CD14-positive monocyte (primary cell): ENCODE measurements at regions of chr1 and their contacts with region 1.

Region 1: DNA sequence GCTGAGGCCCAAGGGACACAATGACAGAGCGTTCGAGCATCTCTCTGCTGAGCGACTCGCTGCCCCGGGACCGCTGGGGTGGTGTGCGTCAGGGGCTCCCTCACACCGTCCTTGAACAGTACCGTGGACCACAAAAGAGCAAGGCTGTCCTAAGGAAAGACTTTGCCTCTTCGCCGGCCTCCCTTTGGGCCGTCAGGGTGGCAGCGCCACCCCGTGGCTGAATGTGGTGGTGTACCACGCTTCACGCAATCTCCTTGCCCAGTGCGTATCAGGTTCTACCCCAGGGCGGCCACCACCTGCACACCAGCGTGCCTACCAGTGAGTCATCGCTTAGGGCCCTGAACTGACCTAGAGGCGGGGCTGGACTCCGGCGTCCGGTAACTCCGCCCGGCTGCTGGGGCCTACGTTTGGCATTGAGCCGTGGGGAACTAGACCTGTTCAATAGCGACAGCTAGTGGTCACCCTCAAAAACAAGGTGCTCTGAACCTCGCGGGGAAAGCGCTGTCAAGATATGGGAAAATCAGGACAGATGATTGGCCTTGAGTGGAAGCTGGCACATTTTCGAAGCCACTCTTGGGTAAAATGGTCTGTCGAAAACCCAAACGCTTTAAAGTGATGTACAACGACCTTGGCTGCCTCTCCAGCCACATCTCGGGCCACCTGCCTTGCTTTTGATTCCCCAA is 8.1 kb upstream of the TRAF3IP3 start:
- DNase-seq: peak; percentile 96 to 99 (median 97)
- H3K4me3 ChIP-seq: peak overlapping the region; percentile 9 to 65 (median 24)
- H3K4me3 Mint-ChIP-seq: peak overlapping the region; percentile 62 to 85
- H3K27ac ChIP-seq: peak overlapping the region; percentile 15 to 63
- H3K27ac Mint-ChIP-seq: peak overlapping the region; percentile 48 to 93 (median 89)
- H3K4me1 ChIP-seq: peaks cover 50 to 51% of the 10 kb centered on the region in 2 donors
- H3K4me1 Mint-ChIP-seq: peaks cover 45% of the 10 kb centered on the region
- H3K27me3 ChIP-seq: no peaks in the 10 kb centered on the region
- H3K27me3 Mint-ChIP-seq: peaks cover 0 to 6% (median 0%) of the 10 kb centered on the region in 3 donors
- CTCF ChIP-seq: peak; percentile 93

Region 2: DNA sequence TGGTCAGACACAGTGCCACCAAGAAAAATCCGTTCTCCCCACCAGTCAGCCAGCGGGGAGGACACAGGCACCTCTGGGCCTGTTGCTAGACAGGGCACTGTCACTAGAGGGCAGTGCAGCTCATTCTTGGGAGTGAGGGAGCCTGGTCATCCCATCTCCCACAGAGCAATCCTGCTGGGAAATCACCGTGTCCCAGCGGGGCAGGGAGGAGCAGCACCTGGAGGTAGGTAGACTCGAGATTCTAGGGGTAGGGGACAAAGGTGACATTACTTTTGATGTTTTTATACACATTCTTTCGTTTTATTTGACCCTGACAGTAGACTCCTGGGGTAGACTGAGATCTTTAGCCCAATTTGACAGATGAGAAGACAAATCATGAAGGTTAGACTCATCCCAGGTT is 170.9 kb before region 1 on chr1:
- intact Hi-C with region 1: loop called (anchors 5 kb)
- DNase-seq: peak; percentile 45 to 74 (median 71)
- H3K4me3 ChIP-seq: no peak overlapping the region
- H3K4me3 Mint-ChIP-seq: peak overlapping the region in 1 of 2 donors; percentile 46
- H3K27ac ChIP-seq: no peak overlapping the region
- H3K27ac Mint-ChIP-seq: peak overlapping the region in 2 of 7 donors; percentile 37 to 68
- H3K4me1 ChIP-seq: no peaks in the 10 kb centered on the region
- H3K4me1 Mint-ChIP-seq: no peaks in the 10 kb centered on the region
- H3K27me3 ChIP-seq: peaks cover 8 to 16% of the 10 kb centered on the region in 2 donors
- H3K27me3 Mint-ChIP-seq: peaks cover 4 to 26% (median 8%) of the 10 kb centered on the region in 3 donors
- CTCF ChIP-seq: peak; percentile 99

Region 3: DNA sequence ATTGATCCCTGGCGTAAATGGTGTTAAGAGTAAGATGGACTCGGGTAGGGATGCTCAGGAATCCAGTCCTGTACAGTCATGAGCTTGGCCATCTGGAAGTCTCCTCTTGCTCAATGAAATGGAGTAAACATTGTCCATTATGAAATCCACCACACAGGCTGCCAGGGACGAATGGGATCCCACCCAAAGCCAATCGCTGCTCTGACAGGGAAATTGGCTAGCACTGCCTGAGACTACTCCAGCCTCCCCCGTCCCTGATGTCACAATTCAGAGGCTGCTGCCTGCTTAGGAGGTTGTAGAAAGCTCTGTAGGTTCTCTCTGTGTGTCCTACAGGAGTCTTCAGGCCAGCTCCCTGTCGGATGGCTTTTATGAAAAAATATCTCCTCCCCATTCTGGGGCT is 43.1 kb before region 1 on chr1 and contains the start of gene HSD11B1:
- intact Hi-C with region 1: loop called (anchors 5 to 10 kb)
- DNase-seq: peak in 1 of 3 donors; percentile 12
- H3K4me3 ChIP-seq: peak within 1 kb of the TSS in 1 of 3 experiments; percentile 33
- H3K4me3 Mint-ChIP-seq: peak within 1 kb of the TSS in 1 of 2 donors; percentile 40
- H3K27ac ChIP-seq: no peak within 1 kb of the TSS
- H3K27ac Mint-ChIP-seq: peak within 1 kb of the TSS in 3 of 7 donors; percentile 11 to 40 (median 12)
- H3K4me1 ChIP-seq: peaks cover 18 to 20% of the 10 kb centered on the region in 2 donors
- H3K4me1 Mint-ChIP-seq: peaks cover 19% of the 10 kb centered on the region
- H3K27me3 ChIP-seq: no peaks in the 10 kb centered on the region
- H3K27me3 Mint-ChIP-seq: peaks cover 0 to 4% (median 0%) of the 10 kb centered on the region in 3 donors
- CTCF ChIP-seq: no peak
- polyA plus RNA-seq, gene HSD11B1: not detected

Region 4: DNA sequence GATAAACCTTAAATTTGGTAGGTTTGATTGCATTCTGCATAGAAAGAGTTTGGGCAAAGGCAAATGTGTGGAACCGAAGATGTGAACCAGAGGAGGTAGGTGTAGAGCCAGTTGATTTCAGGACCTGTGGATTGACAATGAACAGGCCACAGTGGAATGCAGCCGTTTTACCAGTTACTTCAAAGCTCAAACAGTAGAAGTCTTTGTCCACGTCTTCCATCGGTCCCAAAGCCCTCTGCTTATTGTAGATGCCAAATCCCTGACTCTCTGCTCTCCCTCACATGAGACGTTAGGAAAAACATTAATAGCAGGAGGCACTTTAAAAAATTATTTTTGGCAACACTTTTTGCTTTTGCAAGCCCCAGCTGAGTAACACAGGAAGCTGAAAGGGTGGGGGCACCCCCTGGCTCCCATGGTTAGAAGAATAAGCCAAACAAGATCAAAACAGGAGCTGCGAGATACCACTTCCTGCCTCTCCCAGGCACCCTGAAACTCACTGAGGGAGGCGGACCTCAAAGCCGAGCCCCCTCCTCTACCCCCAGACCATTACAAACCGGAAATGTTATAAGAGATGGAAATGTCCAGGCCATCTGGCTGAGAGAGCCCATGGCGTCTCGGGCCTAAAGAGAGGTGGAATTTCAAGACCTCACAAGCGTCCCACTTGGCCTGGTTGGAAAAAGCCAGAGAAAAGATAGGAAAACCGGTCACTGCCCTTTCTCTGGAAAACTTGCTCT is 21.6 kb after region 1 on chr1:
- intact Hi-C with region 1: loop called in 1 of 2 experiments (anchors 2 kb)
- DNase-seq: peak; percentile 77 to 90 (median 85)
- H3K4me3 ChIP-seq: peak overlapping the region; percentile 48 to 82 (median 55)
- H3K4me3 Mint-ChIP-seq: no peak overlapping the region
- H3K27ac ChIP-seq: peak overlapping the region; percentile 93 to 96
- H3K27ac Mint-ChIP-seq: no peak overlapping the region
- H3K4me1 ChIP-seq: peaks cover 70 to 91% of the 10 kb centered on the region in 2 donors
- H3K4me1 Mint-ChIP-seq: peaks cover 51% of the 10 kb centered on the region
- H3K27me3 ChIP-seq: no peaks in the 10 kb centered on the region
- H3K27me3 Mint-ChIP-seq: no peaks in the 10 kb centered on the region
- CTCF ChIP-seq: no peak

Region 5: DNA sequence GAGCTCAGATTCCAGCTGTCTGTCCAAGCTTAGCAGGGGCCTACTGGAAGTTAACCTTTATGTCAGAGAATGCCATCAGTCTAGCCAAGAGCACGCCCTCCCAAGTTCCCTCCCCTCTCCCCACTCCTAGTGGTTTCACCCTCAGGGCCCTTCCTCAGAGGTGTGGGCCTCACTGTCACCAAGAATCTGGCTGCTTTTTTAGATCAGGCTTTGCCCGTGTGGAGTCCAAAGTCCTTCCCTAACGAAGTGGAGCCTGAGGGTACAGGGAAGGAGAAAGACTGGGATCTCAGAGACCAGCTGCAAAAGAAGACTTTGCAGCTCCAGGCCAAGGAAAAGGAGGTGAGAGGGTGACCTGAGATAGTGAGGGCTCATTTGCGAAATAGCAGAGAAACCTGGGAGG is 32.5 kb after region 1 on chr1:
- intact Hi-C with region 1: no loop called
- DNase-seq: no peak
- H3K4me3 ChIP-seq: no peak overlapping the region
- H3K4me3 Mint-ChIP-seq: no peak overlapping the region
- H3K27ac ChIP-seq: peak overlapping the region in 1 of 2 donors; percentile 17
- H3K27ac Mint-ChIP-seq: peak overlapping the region in 6 of 7 donors; percentile 42 to 88 (median 66)
- H3K4me1 ChIP-seq: peaks cover 14 to 21% of the 10 kb centered on the region in 2 donors
- H3K4me1 Mint-ChIP-seq: peaks cover 24% of the 10 kb centered on the region
- H3K27me3 ChIP-seq: no peaks in the 10 kb centered on the region
- H3K27me3 Mint-ChIP-seq: no peaks in the 10 kb centered on the region
- CTCF ChIP-seq: no peak